Activated naive CD4-positive, alpha-beta T cell treated with anti-CD3 and anti-CD28 coated beads for 36 hours (primary cell): ENCODE measurements at regions of chr7 and their contacts with region 1.

Region 1: GRCh38 chr7:142711746-142712619 is 37.3 kb upstream of the PRSS1 start:
- DNase-seq: peak; percentile 51
- H3K4me3 Mint-ChIP-seq: peak overlapping the region; percentile 78
- H3K27ac Mint-ChIP-seq: peak overlapping the region; percentile 89
- H3K4me1 Mint-ChIP-seq: peaks cover 43% of the 10 kb centered on the region
- H3K27me3 Mint-ChIP-seq: no peaks in the 10 kb centered on the region

Region 2: GRCh38 chr7:142669074-142669654 is 42.8 kb before region 1 on chr7:
- CTCF ChIA-PET with region 1: interaction called, 5 read pairs
- intact Hi-C with region 1: loop called (anchors 1 kb)
- DNase-seq: no peak
- H3K4me3 Mint-ChIP-seq: no peak overlapping the region
- H3K27ac Mint-ChIP-seq: peak overlapping the region; percentile 13
- H3K4me1 Mint-ChIP-seq: peaks cover 28% of the 10 kb centered on the region
- H3K27me3 Mint-ChIP-seq: no peaks in the 10 kb centered on the region